GM13976 (cell line): ENCODE measurements at regions of chr17 and their contacts with region 1.

Region 1: GRCh38 chr17:19833914-19834313 is 33.8 kb downstream of the ULK2 start:
- DNase-seq: no peak
- CTCF ChIP-seq: no peak

Region 2: DNA sequence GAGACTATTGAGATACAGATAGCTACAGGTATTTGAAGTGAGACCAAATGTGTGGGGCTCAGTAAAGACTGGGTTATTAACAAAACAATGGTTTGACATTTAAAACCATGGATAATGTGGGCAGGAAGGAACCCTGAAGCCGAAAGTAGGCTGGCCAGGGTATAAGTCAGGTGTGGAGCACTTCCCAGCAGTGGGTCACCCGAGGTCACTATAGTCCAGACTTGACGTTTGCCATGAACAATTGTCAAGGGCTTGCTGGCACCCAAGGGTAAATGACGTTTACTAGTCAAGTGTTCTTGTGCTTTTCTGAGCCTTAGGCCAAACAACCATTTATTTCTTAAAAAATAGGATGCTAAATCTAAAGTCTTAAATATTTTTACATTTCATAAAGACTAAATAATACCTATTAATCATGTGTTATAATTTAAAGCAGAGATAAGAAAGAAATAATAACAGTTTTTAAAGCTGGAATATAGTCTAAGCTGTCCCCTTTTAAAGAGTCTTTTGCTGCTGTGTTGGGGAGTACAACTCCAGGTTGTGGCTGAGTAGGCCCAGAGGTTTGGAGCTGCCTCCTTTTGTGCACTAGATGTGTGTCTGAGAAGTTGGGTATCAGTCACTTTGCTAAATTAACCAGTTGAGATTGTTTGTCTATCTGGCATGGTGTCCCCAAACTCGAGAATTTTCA is 169.6 kb before region 1 on chr17:
- in situ Hi-C with region 1: no loop called
- DNase-seq: no peak
- CTCF ChIP-seq: no peak

Region 3: GRCh38 chr17:19940722-19941464 is 107.0 kb after region 1 on chr17:
- in situ Hi-C with region 1: loop called (anchors 25 kb)
- DNase-seq: no peak
- CTCF ChIP-seq: no peak